SK-N-SH (cell line): ENCODE measurements at regions of chr17 and their contacts with region 1.

Region 1: GRCh38 chr17:76278952-76279741 is 14.0 kb downstream of the UBALD2 start:
- DNase-seq: peak; percentile 99
- H3K4me3 ChIP-seq: no peak overlapping the region; a peak in 1 of 4 replicates
- H3K27ac ChIP-seq: no peak overlapping the region
- H3K4me1 ChIP-seq: peaks cover 5 to 10% of the 10 kb centered on the region in 2 experiments; a peak in 1 of 4 replicates
- H3K27me3 ChIP-seq: no peaks in the 10 kb centered on the region
- CTCF ChIP-seq: peak; percentile 99
- EP300 ChIP-seq: no peak
- RAD21 ChIP-seq: peak; percentile 97

Region 2: GRCh38 chr17:76079956-76080767 is 199.0 kb before region 1 on chr17:
- CTCF ChIA-PET with region 1: interaction called, 21 read pairs
- POLR2A ChIA-PET with region 1: interaction called, 5 read pairs
- DNase-seq: peak; percentile 80
- H3K4me3 ChIP-seq: peak overlapping the region in 1 of 2 experiments; percentile 19; a peak in 1 of 4 replicates
- H3K27ac ChIP-seq: no peak overlapping the region
- H3K4me1 ChIP-seq: peaks cover 0 to 32% of the 10 kb centered on the region in 2 experiments; a peak in 1 of 4 replicates
- H3K27me3 ChIP-seq: peaks cover 55% of the 10 kb centered on the region
- CTCF ChIP-seq: no peak; the same call in 1 of the 2 replicates
- EP300 ChIP-seq: no peak
- RAD21 ChIP-seq: no peak

Region 3: GRCh38 chr17:76141212-76142038 is 137.7 kb before region 1 on chr17 and contains the start of gene FOXJ1:
- CTCF ChIA-PET with region 1: interaction called, 56 read pairs
- POLR2A ChIA-PET with region 1: interaction called, 4 read pairs
- DNase-seq: peak; percentile 100
- H3K4me3 ChIP-seq: peak within 1 kb of the TSS; percentile 55 to 63
- H3K27ac ChIP-seq: no peak within 1 kb of the TSS
- H3K4me1 ChIP-seq: peaks cover 0 to 16% of the 10 kb centered on the region in 2 experiments; a peak in 2 of 4 replicates
- H3K27me3 ChIP-seq: peaks cover 20% of the 10 kb centered on the region; the same call in 1 of the 2 replicates
- CTCF ChIP-seq: no peak
- EP300 ChIP-seq: no peak
- RAD21 ChIP-seq: no peak
- polyA plus RNA-seq, gene FOXJ1: not detected in 2 replicates

Region 4: GRCh38 chr17:76182016-76182764 is 97.0 kb before region 1 on chr17:
- CTCF ChIA-PET with region 1: interaction called, 75 read pairs
- POLR2A ChIA-PET with region 1: no interaction called
- DNase-seq: peak; percentile 94
- H3K4me3 ChIP-seq: no peak overlapping the region; a peak in 1 of 4 replicates
- H3K27ac ChIP-seq: no peak overlapping the region
- H3K4me1 ChIP-seq: peaks cover 0 to 3% of the 10 kb centered on the region in 2 experiments; a peak in 1 of 4 replicates
- H3K27me3 ChIP-seq: no peaks in the 10 kb centered on the region
- CTCF ChIP-seq: peak; percentile 99
- EP300 ChIP-seq: peak in 1 of 2 experiments; percentile 31; a peak in 1 of 4 replicates
- RAD21 ChIP-seq: peak; percentile 76

Region 5: GRCh38 chr17:76246080-76247066 is 32.8 kb before region 1 on chr17:
- CTCF ChIA-PET with region 1: interaction called, 55 read pairs
- POLR2A ChIA-PET with region 1: no interaction called
- DNase-seq: no peak
- H3K4me3 ChIP-seq: no peak overlapping the region
- H3K27ac ChIP-seq: no peak overlapping the region
- H3K4me1 ChIP-seq: no peaks in the 10 kb centered on the region; a peak in 1 of 4 replicates
- H3K27me3 ChIP-seq: no peaks in the 10 kb centered on the region
- CTCF ChIP-seq: no peak
- EP300 ChIP-seq: no peak
- RAD21 ChIP-seq: no peak

Region 6: DNA sequence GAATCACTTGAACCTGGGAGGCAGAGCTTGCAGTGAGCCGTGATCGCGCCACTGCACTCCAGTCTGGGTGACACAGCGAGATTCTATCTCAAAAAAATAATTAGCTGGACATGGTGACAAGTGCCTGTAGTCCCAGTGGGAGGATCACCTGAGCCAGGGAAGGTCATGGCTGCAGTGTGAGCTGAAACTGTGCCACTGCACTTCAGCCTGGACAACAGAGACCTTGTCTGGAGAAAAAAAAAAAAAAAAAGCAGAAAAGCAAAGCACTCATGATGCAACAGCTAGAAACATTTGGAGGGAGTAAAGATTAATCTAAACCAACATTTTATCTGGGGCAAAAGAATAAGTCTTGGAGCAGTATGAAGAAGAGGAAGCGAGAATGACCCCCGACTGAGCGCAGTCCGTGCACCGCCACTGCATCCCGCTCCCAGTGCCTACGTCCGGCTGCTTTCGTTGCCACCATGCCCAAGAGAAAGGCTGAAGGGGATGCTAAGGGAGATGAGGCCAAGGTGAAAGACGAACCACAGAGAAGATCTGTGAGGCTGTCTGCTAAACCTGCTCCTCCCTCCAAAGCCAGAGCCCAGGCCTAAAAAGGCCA is 66.3 kb after region 1 on chr17:
- CTCF ChIA-PET with region 1: no interaction called
- POLR2A ChIA-PET with region 1: no interaction called
- DNase-seq: no peak
- H3K4me3 ChIP-seq: no peak overlapping the region
- H3K27ac ChIP-seq: peak overlapping the region in 1 of 2 experiments; percentile 17; a peak in 1 of 4 replicates
- H3K4me1 ChIP-seq: no peaks in the 10 kb centered on the region
- H3K27me3 ChIP-seq: no peaks in the 10 kb centered on the region
- CTCF ChIP-seq: no peak
- EP300 ChIP-seq: no peak
- RAD21 ChIP-seq: no peak

Region 7: GRCh38 chr17:76384222-76384986 is 105.3 kb after region 1 on chr17 and contains the start of gene SPHK1:
- CTCF ChIA-PET with region 1: interaction called, 40 read pairs
- POLR2A ChIA-PET with region 1: no interaction called
- DNase-seq: peak; percentile 91
- H3K4me3 ChIP-seq: peak within 1 kb of the TSS; percentile 53 to 78
- H3K27ac ChIP-seq: peak within 1 kb of the TSS in 1 of 2 experiments; percentile 80; a peak in 2 of 4 replicates
- H3K4me1 ChIP-seq: peaks cover 0 to 40% of the 10 kb centered on the region in 2 experiments; a peak in 1 of 4 replicates
- H3K27me3 ChIP-seq: no peaks in the 10 kb centered on the region
- CTCF ChIP-seq: no peak
- EP300 ChIP-seq: no peak
- RAD21 ChIP-seq: no peak
- polyA plus RNA-seq, gene SPHK1: 7.7 and 12.3 TPM in 2 replicates